Dorsolateral prefrontal cortex (tissue), 120 donors: ENCODE measurements at regions of chr13 and their contacts with region 1.

Region 1: DNA sequence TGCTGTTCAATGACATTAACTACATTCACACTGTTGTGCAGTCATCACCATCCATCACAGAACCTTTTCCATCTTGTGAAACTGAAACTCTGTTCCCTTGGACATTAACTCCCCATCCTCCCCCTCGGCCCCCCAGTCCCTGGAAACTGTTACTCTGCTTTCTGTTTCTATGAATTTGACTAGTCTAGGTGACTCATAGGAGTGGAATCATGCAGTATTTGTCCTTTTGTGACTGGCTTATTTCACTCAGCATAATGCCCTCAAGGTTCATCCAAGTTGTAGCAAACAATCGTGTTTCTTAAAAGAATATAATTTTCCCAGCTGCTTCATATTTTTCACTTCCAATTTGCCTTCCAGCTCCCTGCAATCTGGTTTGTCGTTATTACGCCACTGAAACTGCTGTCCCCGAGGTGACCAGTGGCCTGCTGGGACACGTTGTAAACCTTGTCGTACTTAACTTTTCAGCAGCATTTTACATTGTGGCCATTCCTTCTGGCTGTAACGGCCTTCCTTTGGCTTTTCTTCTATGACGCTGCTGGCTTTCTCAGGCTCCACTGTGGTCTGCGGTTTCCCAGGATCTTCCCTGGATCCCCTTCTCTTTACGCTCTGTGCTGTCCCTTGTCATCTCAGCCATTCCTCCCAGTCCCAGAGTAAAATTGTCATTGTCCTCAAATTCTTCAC is 74.0 kb downstream of the DHRS12 start:
- DNase-seq: no peak
- H3K4me3 ChIP-seq: no peak overlapping the region
- H3K27ac ChIP-seq: peak overlapping the region in 40 of 59 donors; percentile 11 to 93 (median 60)
- H3K27me3 ChIP-seq: no peaks in the 10 kb centered on the region
- CTCF ChIP-seq: no peak

Region 2: GRCh38 chr13:51452361-51453206 is 277.4 kb before region 1 on chr13 and contains the start of gene INTS6:
- intact Hi-C with region 1: loop called (anchors 2 kb)
- DNase-seq: peak in 9 of 10 donors; percentile 100
- H3K4me3 ChIP-seq: peak within 1 kb of the TSS; percentile 76 to 96 (median 90)
- H3K27ac ChIP-seq: peak within 1 kb of the TSS; percentile 89 to 100 (median 99)
- H3K27me3 ChIP-seq: no peaks in the 10 kb centered on the region
- CTCF ChIP-seq: peak in 2 of 56 donors; percentile 0 to 9
- total RNA-seq, gene INTS6: 30.1 to 60.5 (median 42.9) TPM

Region 3: GRCh38 chr13:51632591-51633362 is 97.2 kb before region 1 on chr13:
- intact Hi-C with region 1: loop called (anchors 5 kb)
- DNase-seq: peak; percentile 21 to 88 (median 84)
- H3K4me3 ChIP-seq: peak overlapping the region in 44 of 59 donors; percentile 3 to 57 (median 30)
- H3K27ac ChIP-seq: peak overlapping the region; percentile 54 to 97 (median 90)
- H3K27me3 ChIP-seq: no peaks in the 10 kb centered on the region
- CTCF ChIP-seq: peak in 13 of 56 donors; percentile 11 to 44 (median 26)

Region 4: DNA sequence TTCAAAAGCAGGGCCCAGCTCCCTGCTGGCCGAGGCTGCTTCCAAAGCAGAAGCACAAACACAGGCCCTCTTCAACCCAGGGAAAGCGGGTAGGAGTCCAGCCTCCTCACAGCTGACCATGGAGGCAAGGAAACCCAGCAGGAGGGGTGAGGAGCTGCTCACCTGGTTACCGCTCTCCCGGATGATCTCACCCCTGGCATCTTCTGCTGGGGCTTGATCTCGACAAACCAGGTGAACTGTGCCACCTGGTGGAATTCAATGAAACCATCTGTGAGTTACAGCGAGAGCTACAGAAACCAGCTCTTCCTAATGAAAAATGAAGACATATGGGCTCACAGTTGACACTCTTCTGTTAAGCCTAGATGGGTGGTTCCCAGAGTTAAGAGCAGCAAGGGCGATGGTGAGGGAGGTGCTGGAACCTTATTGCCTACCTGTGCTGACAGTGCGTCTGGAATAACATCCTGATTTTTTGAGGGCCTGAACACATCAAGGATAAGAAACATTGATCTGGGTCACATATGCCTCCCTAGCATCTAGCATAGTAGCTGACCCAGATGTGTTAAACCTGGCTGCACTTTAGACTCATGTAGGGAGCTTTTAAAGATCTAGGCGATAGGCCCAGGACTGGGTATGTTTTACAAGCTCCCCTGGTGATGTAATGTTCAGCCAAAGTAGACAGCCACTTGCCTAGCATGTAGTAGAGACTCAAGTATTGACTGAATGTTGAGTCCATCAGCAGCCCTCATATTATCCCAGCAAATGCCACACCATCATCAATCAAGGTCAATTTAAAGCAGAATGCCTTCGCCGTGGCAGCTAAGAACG is 67.9 kb after region 1 on chr13:
- intact Hi-C with region 1: loop called (anchors 5 to 10 kb)
- DNase-seq: peak in 4 of 10 donors; percentile 38 to 84 (median 58)
- H3K4me3 ChIP-seq: no peak overlapping the region
- H3K27ac ChIP-seq: peak overlapping the region in 6 of 59 donors; percentile 6 to 62 (median 18)
- H3K27me3 ChIP-seq: no peaks in the 10 kb centered on the region
- CTCF ChIP-seq: peak in 55 of 56 donors; percentile 23 to 72 (median 53)